Aorta (tissue), 5 donors: ENCODE measurements at regions of chr3 and their contacts with region 1.

Region 1: DNA sequence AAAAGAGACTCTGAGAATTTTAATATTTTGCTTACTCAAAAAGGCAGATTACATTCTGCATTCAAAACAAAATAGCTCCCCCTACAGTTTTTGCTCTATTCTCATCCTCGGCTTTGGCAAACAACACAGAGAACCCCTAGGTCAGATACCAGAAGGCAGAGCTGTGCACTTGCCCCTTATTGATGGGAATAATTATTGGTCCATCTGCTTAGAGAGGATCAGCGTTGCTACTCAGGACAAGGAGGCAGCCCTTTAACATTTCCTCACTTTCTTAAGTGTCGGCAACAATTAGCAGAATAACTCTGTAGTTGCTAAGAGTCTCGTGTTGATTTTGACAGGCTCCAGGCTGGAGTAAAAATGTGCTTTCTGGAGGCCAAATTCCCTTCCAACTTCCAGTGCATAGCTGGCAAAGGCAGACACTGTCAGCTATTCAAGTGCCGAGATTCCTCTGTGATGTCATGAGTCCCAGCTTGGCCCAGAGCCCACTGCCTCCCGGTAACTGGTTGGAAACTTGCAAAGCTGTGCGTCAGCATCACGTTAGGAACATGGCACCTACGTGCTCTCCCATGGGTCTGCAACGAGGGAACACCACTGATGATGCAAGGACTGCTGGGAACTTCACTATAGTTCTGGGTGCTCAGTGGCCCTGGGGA is 482.7 kb upstream of the ADAMTS9 start:
- DNase-seq: peak; percentile 94 to 97
- ATAC-seq: peak; percentile 91
- H3K4me3 ChIP-seq: no peak overlapping the region
- H3K27ac ChIP-seq: peak overlapping the region in 1 of 2 donors; percentile 67
- H3K4me1 ChIP-seq: no peaks in the 10 kb centered on the region
- H3K27me3 ChIP-seq: no peaks in the 10 kb centered on the region

Region 2: DNA sequence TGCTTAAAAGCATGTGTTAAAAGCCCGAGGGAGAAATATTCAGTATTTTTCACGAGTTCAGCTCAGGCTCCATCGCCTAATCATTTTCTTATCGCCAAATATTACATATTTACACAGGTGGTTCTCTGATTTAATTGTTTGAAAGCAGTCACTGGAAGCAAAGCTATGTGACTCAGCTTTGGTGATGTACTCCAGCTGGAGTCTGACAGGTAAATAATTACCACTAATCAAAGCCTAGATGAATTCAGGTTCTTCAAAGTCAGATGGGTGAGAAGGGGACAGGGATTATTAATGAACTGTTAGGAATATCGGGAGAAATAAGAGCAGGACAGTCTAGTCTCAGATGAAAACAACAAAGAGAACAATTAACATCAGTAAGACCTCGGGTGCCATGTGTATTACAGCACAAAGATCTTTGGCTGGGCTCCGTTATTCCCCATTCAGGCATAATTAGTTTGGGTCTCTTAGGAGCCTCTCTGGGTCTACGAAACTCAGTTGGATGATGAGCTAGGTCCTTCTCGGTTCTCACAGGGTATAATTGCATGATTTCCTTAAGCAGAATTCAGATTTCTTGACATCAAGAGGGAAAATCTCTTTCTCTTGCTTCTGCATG is 151.0 kb before region 1 on chr3:
- intact Hi-C with region 1: loop called in 1 of 2 experiments (anchors 10 kb)
- DNase-seq: no peak
- ATAC-seq: no peak
- H3K4me3 ChIP-seq: no peak overlapping the region
- H3K27ac ChIP-seq: no peak overlapping the region
- H3K4me1 ChIP-seq: no peaks in the 10 kb centered on the region
- H3K27me3 ChIP-seq: no peaks in the 10 kb centered on the region

Region 3: DNA sequence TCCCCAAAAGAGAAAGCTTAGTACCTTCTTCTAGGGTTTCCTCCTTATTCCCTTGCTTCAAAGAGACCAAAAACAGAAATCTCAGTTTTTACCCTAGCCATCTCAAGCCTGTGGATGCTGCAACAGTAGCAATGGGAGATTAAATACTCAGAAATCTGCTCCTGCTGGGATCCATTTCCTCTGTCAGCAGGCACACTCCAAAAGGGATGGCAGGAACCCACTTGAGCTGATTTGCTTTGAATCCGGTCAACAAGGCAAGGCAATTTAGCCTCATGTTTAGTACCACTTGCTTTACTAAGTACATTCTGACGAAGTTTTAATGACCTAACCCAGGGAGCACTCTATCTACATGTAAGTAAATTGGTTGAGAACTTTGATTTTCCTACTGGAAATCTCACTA is 107.3 kb after region 1 on chr3:
- intact Hi-C with region 1: no loop called
- DNase-seq: no peak
- ATAC-seq: no peak
- H3K4me3 ChIP-seq: no peak overlapping the region
- H3K27ac ChIP-seq: no peak overlapping the region
- H3K4me1 ChIP-seq: no peaks in the 10 kb centered on the region
- H3K27me3 ChIP-seq: no peaks in the 10 kb centered on the region